Vagina (tissue), 2 donors: ENCODE measurements at regions of chr3 and their contacts with region 1.

Region 1: DNA sequence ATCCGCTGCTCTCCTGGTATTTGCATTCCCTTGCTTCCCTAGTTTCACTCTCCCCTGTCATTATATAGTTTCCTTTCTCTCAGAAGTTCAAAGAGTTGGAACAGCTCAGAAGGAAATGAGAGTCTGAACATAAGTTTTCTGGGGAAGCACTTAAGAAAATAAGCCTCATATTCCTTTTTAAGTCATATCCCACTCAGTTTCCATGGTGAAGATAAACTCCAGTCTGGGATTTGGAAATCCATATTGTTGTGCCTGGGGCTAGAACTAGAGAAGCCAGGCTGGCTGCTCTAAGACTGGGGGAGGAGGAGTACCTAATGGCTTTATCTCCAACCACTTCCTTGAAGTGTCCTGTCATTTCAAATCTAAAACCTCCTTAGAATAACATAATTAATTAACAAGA is 134.2 kb upstream of the ALCAM start:
- DNase-seq: no peak
- H3K4me3 ChIP-seq: no peak overlapping the region
- H3K27ac ChIP-seq: no peak overlapping the region
- H3K4me1 ChIP-seq: no peaks in the 10 kb centered on the region
- H3K27me3 ChIP-seq: no peaks in the 10 kb centered on the region
- CTCF ChIP-seq: no peak
- POLR2A ChIP-seq: no peak

Region 2: DNA sequence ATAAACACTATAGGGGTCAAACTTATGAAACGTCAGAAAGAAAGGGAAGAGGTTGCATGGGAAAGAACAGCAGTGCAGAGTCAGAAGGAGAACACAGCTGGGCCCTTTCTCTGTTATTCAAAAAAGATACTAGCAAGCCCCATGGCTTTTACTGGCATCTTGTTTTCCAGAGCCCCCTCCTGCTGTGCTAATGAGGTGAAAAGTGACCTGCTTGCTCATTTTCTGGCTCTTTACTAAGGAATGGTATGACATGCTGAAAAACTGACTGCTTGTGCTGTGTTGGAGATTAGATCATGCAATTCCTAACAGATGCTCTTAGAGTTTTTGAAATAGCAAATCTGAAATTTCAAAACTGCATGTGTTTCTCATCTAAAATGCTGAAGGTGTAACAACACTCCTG is 407.4 kb before region 1 on chr3:
- intact Hi-C with region 1: no loop called
- DNase-seq: no peak
- H3K4me3 ChIP-seq: no peak overlapping the region
- H3K27ac ChIP-seq: no peak overlapping the region
- H3K4me1 ChIP-seq: no peaks in the 10 kb centered on the region
- H3K27me3 ChIP-seq: no peaks in the 10 kb centered on the region
- CTCF ChIP-seq: no peak
- POLR2A ChIP-seq: no peak

Region 3: DNA sequence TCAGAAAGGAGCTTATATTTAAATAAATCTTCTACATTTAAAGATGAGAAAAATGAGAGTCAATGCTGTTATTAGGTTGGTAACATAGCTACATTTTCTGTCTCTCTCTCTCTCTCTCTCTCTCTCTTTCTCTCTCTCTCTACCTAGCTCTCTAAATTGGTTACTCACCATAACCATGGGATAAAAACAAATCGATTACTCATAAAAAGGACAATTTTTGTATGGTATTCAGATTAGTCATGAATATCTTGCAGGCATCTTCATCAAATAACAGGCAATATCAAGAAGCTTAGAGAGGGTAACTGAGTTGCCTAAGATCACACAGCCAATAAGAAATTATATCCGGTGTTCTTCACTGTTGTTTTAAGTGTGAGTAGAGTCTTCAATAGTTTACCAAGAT is 52.3 kb after region 1 on chr3:
- intact Hi-C with region 1: no loop called
- DNase-seq: no peak
- H3K4me3 ChIP-seq: no peak overlapping the region
- H3K27ac ChIP-seq: no peak overlapping the region
- H3K4me1 ChIP-seq: no peaks in the 10 kb centered on the region
- H3K27me3 ChIP-seq: no peaks in the 10 kb centered on the region
- CTCF ChIP-seq: no peak
- POLR2A ChIP-seq: no peak

Region 4: GRCh38 chr3:105322570-105323273 is 90.2 kb after region 1 on chr3:
- intact Hi-C with region 1: no loop called
- DNase-seq: no peak
- H3K4me3 ChIP-seq: no peak overlapping the region
- H3K27ac ChIP-seq: no peak overlapping the region
- H3K4me1 ChIP-seq: no peaks in the 10 kb centered on the region
- H3K27me3 ChIP-seq: no peaks in the 10 kb centered on the region
- CTCF ChIP-seq: no peak
- POLR2A ChIP-seq: no peak

Region 5: GRCh38 chr3:105598047-105598796 is 365.7 kb after region 1 on chr3:
- intact Hi-C with region 1: loop called (anchors 5 kb)
- DNase-seq: no peak
- H3K4me3 ChIP-seq: no peak overlapping the region
- H3K27ac ChIP-seq: no peak overlapping the region
- H3K4me1 ChIP-seq: no peaks in the 10 kb centered on the region
- H3K27me3 ChIP-seq: no peaks in the 10 kb centered on the region
- CTCF ChIP-seq: no peak
- POLR2A ChIP-seq: no peak